ENCODE measurements at regions of chr14 and their contacts with region 1.

Region 1: GRCh38 chr14:90409209-90409730 is 12.4 kb downstream of the CALM1 start:
- DNase-seq: peak; percentile 78 to 92
- H3K4me3 ChIP-seq: no peak overlapping the region
- H3K27ac ChIP-seq: peak overlapping the region; percentile 78 to 79
- H3K4me1 ChIP-seq: peaks cover 0 to 4% of the 10 kb centered on the region in 2 donors
- H3K27me3 ChIP-seq: no peaks in the 10 kb centered on the region
- CTCF ChIP-seq: no peak
- POLR2A ChIP-seq: no peak

Region 2: DNA sequence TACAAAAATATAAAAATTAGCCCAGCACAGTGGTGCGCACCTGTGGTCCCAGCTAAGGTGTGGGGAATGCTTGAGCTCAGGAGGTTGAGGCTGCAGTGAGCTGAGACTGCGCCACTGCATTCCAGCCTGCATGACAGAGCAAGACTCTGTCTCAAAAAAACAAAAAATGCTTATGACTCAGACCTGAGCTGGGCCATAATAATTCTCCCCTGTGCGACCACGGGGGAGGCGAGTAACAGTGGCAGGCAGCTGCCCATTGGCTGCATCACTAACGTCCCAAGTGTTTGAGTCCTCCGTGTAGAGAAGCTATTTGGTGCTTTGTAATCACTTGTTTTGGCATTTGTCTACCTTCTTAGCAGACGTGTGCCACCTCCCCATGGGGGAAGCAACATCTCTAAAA is 128.0 kb before region 1 on chr14:
- intact Hi-C with region 1: loop called (anchors 5 kb)
- DNase-seq: no peak
- H3K4me3 ChIP-seq: no peak overlapping the region
- H3K27ac ChIP-seq: no peak overlapping the region
- H3K4me1 ChIP-seq: no peaks in the 10 kb centered on the region
- H3K27me3 ChIP-seq: no peaks in the 10 kb centered on the region
- CTCF ChIP-seq: no peak
- POLR2A ChIP-seq: no peak

Region 3: GRCh38 chr14:90345239-90345557 is 64.1 kb before region 1 on chr14:
- intact Hi-C with region 1: no loop called
- DNase-seq: no peak
- H3K4me3 ChIP-seq: no peak overlapping the region
- H3K27ac ChIP-seq: no peak overlapping the region
- H3K4me1 ChIP-seq: no peaks in the 10 kb centered on the region
- H3K27me3 ChIP-seq: no peaks in the 10 kb centered on the region
- CTCF ChIP-seq: no peak
- POLR2A ChIP-seq: no peak